Breast epithelium (tissue), 4 donors: ENCODE measurements at regions of chr17 and their contacts with region 1.

Region 1: GRCh38 chr17:9419932-9420453 is 155.6 kb downstream of the STX8 start:
- DNase-seq: no peak
- H3K4me3 ChIP-seq: no peak overlapping the region
- H3K27ac ChIP-seq: no peak overlapping the region
- H3K4me1 ChIP-seq: no peaks in the 10 kb centered on the region
- H3K27me3 ChIP-seq: no peaks in the 10 kb centered on the region
- CTCF ChIP-seq: no peak
- POLR2A ChIP-seq: no peak

Region 2: GRCh38 chr17:8785547-8786413 is 634.2 kb before region 1 on chr17:
- intact Hi-C with region 1: loop called (anchors 5 kb)
- DNase-seq: peak; percentile 44 to 76
- H3K4me3 ChIP-seq: no peak overlapping the region
- H3K27ac ChIP-seq: no peak overlapping the region
- H3K4me1 ChIP-seq: no peaks in the 10 kb centered on the region
- H3K27me3 ChIP-seq: no peaks in the 10 kb centered on the region
- CTCF ChIP-seq: peak; percentile 43 to 71 (median 70)
- POLR2A ChIP-seq: no peak